CD14-positive monocyte (primary cell): ENCODE measurements at regions of chr2 and their contacts with region 1.

Region 1: GRCh38 chr2:221573430-221574230 is 1.5 kb upstream of the EPHA4 start:
- DNase-seq: peak; percentile 40 to 68 (median 52)
- H3K4me3 ChIP-seq: peak overlapping the region; percentile 21 to 82 (median 32)
- H3K4me3 Mint-ChIP-seq: peak overlapping the region; percentile 71 to 95
- H3K27ac ChIP-seq: no peak overlapping the region
- H3K27ac Mint-ChIP-seq: peak overlapping the region in 1 of 7 donors; percentile 38
- H3K4me1 ChIP-seq: peaks cover 33 to 39% of the 10 kb centered on the region in 2 donors
- H3K4me1 Mint-ChIP-seq: peaks cover 36% of the 10 kb centered on the region
- H3K27me3 ChIP-seq: peaks cover 51 to 76% of the 10 kb centered on the region in 2 donors
- H3K27me3 Mint-ChIP-seq: peaks cover 66 to 79% (median 67%) of the 10 kb centered on the region in 3 donors
- CTCF ChIP-seq: peak; percentile 95

Region 2: DNA sequence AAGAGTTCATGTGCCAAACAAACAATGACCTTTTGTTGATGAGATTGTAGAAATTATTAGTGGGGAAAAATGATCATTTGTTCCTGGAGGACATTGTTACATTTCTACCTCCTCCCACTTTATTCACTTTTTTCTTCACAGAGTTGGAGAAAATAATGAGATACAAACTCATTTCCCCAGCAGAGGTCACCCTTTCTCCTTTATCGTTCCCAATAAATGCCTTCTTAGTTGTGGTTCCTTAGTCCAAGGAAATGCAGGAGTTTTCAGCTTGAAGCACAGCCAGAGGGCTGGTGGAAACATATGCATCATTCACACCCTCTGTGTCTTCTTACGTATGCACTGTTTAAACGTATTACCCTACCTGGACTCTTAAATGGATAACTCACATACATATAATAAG is 1837.4 kb before region 1 on chr2:
- intact Hi-C with region 1: loop called in 1 of 2 experiments (anchors 5 kb)
- DNase-seq: no peak
- H3K4me3 ChIP-seq: no peak overlapping the region
- H3K4me3 Mint-ChIP-seq: no peak overlapping the region
- H3K27ac ChIP-seq: no peak overlapping the region
- H3K27ac Mint-ChIP-seq: no peak overlapping the region
- H3K4me1 ChIP-seq: no peaks in the 10 kb centered on the region
- H3K4me1 Mint-ChIP-seq: no peaks in the 10 kb centered on the region
- H3K27me3 ChIP-seq: no peaks in the 10 kb centered on the region
- H3K27me3 Mint-ChIP-seq: peaks cover 0 to 15% (median 12%) of the 10 kb centered on the region in 3 donors
- CTCF ChIP-seq: peak; percentile 23

Region 3: DNA sequence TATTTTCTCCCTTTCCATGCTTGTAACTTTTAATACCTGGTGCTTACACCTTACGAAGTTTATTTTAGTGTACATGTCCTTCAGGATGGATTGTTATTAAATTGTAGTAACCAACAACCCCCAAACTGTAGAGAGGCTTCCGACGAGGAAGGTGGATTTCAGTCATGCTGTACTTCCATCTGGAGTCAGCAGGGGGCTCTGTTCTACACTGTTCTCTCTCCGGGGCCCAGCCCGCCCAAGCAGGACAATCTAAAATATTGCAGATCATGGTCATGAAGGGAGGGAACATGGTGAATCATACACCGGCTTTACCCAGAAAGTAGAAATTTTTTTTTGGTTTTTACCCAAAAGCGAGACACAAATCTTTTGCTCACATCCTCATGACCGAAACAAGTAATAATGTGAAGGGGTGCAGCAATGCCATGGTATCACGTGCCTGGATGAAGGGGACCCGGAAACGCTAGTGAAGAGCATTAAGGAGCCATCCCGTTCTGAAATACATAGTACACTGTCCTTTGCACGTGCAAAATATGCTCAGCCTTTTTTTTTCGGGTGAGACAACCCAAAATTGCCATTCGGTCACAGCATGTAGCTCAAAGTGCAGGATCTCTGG is 886.3 kb before region 1 on chr2:
- intact Hi-C with region 1: loop called (anchors 2 kb)
- DNase-seq: peak in 2 of 3 donors; percentile 9 to 28
- H3K4me3 ChIP-seq: no peak overlapping the region
- H3K4me3 Mint-ChIP-seq: no peak overlapping the region
- H3K27ac ChIP-seq: no peak overlapping the region
- H3K27ac Mint-ChIP-seq: no peak overlapping the region
- H3K4me1 ChIP-seq: no peaks in the 10 kb centered on the region
- H3K4me1 Mint-ChIP-seq: no peaks in the 10 kb centered on the region
- H3K27me3 ChIP-seq: no peaks in the 10 kb centered on the region
- H3K27me3 Mint-ChIP-seq: peaks cover 0 to 3% (median 2%) of the 10 kb centered on the region in 3 donors
- CTCF ChIP-seq: peak; percentile 75

Region 4: GRCh38 chr2:221533301-221533700 is 40.3 kb before region 1 on chr2:
- intact Hi-C with region 1: no loop called
- DNase-seq: no peak
- H3K4me3 ChIP-seq: no peak overlapping the region
- H3K4me3 Mint-ChIP-seq: no peak overlapping the region
- H3K27ac ChIP-seq: no peak overlapping the region
- H3K27ac Mint-ChIP-seq: no peak overlapping the region
- H3K4me1 ChIP-seq: no peaks in the 10 kb centered on the region
- H3K4me1 Mint-ChIP-seq: no peaks in the 10 kb centered on the region
- H3K27me3 ChIP-seq: no peaks in the 10 kb centered on the region
- H3K27me3 Mint-ChIP-seq: peaks cover 3 to 6% (median 4%) of the 10 kb centered on the region in 3 donors
- CTCF ChIP-seq: no peak

Region 5: GRCh38 chr2:221671515-221671914 is 97.9 kb after region 1 on chr2:
- intact Hi-C with region 1: no loop called
- DNase-seq: no peak
- H3K4me3 ChIP-seq: no peak overlapping the region
- H3K4me3 Mint-ChIP-seq: no peak overlapping the region
- H3K27ac ChIP-seq: no peak overlapping the region
- H3K27ac Mint-ChIP-seq: no peak overlapping the region
- H3K4me1 ChIP-seq: no peaks in the 10 kb centered on the region
- H3K4me1 Mint-ChIP-seq: no peaks in the 10 kb centered on the region
- H3K27me3 ChIP-seq: no peaks in the 10 kb centered on the region
- H3K27me3 Mint-ChIP-seq: peaks cover 0 to 1% (median 1%) of the 10 kb centered on the region in 3 donors
- CTCF ChIP-seq: no peak